Dendritic cell treated with granulocyte-macrophage colony-stimulating factor and Interleukin-4, amounts not matched to agents 40 ng/mL and 50 ng/mL, for 4 days (primary cell): ENCODE measurements at regions of chr1 and their contacts with region 1.

Region 1: DNA sequence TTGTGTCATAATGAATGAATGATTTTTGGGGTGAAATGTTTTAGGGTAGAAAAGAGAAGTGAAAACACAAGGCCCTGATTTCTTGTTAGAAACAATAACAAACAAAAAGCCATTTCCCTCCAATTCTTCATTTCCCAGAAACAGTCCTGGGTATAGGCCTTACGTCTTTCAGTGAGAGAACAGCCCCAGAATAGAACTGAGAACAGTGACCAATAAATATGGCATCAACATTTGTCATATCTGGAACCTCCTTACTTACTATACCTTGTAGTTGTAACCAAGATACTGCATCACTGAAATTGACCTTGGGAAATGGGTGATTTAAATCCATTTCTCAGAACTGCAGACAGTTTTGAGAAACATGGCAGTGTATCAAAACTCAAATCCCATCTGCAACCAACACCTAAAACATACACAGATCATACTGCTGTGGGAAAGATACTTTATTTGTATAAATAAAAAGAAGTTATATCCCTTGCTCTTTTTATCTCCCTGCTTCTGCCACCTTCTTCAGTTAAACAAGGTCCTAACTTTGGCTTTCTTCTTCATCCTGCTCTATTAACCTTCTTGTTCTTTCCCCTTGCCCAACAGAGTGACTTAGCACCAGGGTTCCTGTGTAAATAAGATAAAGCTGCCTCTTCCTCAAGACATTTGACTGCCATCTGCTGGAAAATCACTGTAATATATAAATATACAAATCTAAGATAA is 19.5 kb downstream of the XKR8 start:
- H3K4me3 Mint-ChIP-seq: no peak overlapping the region
- H3K27ac Mint-ChIP-seq: no peak overlapping the region
- H3K4me1 Mint-ChIP-seq: peaks cover 6% of the 10 kb centered on the region
- H3K27me3 Mint-ChIP-seq: no peaks in the 10 kb centered on the region

Region 2: DNA sequence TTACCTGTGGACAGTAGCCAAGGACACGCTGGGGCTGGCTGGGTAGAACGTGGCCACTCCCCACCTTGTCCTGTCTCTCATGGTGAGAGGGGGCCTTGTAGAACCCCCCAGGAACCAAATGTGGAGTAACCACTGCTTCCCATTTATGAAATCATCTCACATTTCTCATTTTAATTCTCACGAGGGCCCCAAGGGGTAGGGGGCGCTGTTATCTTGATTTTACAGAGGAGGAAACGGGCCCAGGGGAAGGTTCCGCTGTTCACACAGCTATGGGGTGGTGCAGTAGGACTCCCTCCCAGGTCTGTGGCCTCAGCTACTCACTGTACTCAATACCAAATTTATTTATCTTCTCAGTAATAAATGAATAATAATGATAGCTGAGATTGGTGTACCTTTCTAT is 39.0 kb before region 1 on chr1:
- intact Hi-C with region 1: loop called (anchors 5 kb)
- H3K4me3 Mint-ChIP-seq: no peak overlapping the region
- H3K27ac Mint-ChIP-seq: peak overlapping the region; percentile 54
- H3K4me1 Mint-ChIP-seq: peaks cover 55% of the 10 kb centered on the region
- H3K27me3 Mint-ChIP-seq: peaks cover 12% of the 10 kb centered on the region

Region 3: GRCh38 chr1:28036431-28036830 is 57.1 kb after region 1 on chr1:
- intact Hi-C with region 1: no loop called
- H3K4me3 Mint-ChIP-seq: no peak overlapping the region
- H3K27ac Mint-ChIP-seq: peak overlapping the region; percentile 64
- H3K4me1 Mint-ChIP-seq: peaks cover 20% of the 10 kb centered on the region
- H3K27me3 Mint-ChIP-seq: no peaks in the 10 kb centered on the region